ENCODE measurements at regions of chr18 and their contacts with region 1.

Region 1: GRCh38 chr18:76709659-76710645 is 112.4 kb upstream of the ZNF236 start:
- DNase-seq: peak; percentile 6 to 76 (median 47)
- ATAC-seq: peak; percentile 78 to 87 (median 82)
- H3K4me3 ChIP-seq: no peak overlapping the region
- H3K4me3 Mint-ChIP-seq: no peak overlapping the region
- H3K27ac ChIP-seq: no peak overlapping the region
- H3K27ac Mint-ChIP-seq: no peak overlapping the region
- H3K4me1 ChIP-seq: peaks cover 0 to 6% of the 10 kb centered on the region in 2 experiments
- H3K4me1 Mint-ChIP-seq: peaks cover 4 to 9% (median 6%) of the 10 kb centered on the region in 3 donors
- H3K27me3 ChIP-seq: peaks cover 0 to 28% of the 10 kb centered on the region in 2 experiments
- H3K27me3 Mint-ChIP-seq: peaks cover 0 to 2% of the 10 kb centered on the region in 2 donors

Region 2: GRCh38 chr18:76398896-76399612 is 310.9 kb before region 1 on chr18:
- CTCF ChIA-PET with region 1: interaction called, 31 to 36 read pairs
- POLR2A ChIA-PET with region 1: no interaction called
- DNase-seq: peak; percentile 23 to 84 (median 67)
- ATAC-seq: peak; percentile 88 to 96 (median 90)
- H3K4me3 ChIP-seq: no peak overlapping the region
- H3K4me3 Mint-ChIP-seq: no peak overlapping the region
- H3K27ac ChIP-seq: no peak overlapping the region
- H3K27ac Mint-ChIP-seq: peak overlapping the region in 1 of 2 donors; percentile 28
- H3K4me1 ChIP-seq: peaks cover 0 to 2% of the 10 kb centered on the region in 2 experiments
- H3K4me1 Mint-ChIP-seq: peaks cover 17 to 29% (median 26%) of the 10 kb centered on the region in 3 donors
- H3K27me3 ChIP-seq: peaks cover 0 to 13% of the 10 kb centered on the region in 2 experiments
- H3K27me3 Mint-ChIP-seq: no peaks in the 10 kb centered on the region

Region 3: GRCh38 chr18:76721207-76721996 is 11.4 kb after region 1 on chr18:
- CTCF ChIA-PET with region 1: interaction called, 8 to 11 read pairs
- POLR2A ChIA-PET with region 1: no interaction called
- DNase-seq: peak; percentile 53 to 84 (median 70)
- ATAC-seq: peak; percentile 96 to 98 (median 98)
- H3K4me3 ChIP-seq: peak overlapping the region in 1 of 2 donors; percentile 49
- H3K4me3 Mint-ChIP-seq: peak overlapping the region; percentile 59 to 75 (median 74)
- H3K27ac ChIP-seq: peak overlapping the region; percentile 36
- H3K27ac Mint-ChIP-seq: peak overlapping the region; percentile 71 to 87
- H3K4me1 ChIP-seq: peaks cover 30 to 50% of the 10 kb centered on the region in 2 experiments
- H3K4me1 Mint-ChIP-seq: peaks cover 49 to 65% (median 55%) of the 10 kb centered on the region in 3 donors
- H3K27me3 ChIP-seq: peaks cover 0 to 3% of the 10 kb centered on the region in 2 experiments
- H3K27me3 Mint-ChIP-seq: no peaks in the 10 kb centered on the region

Region 4: GRCh38 chr18:76741365-76741764 is 31.4 kb after region 1 on chr18:
- CTCF ChIA-PET with region 1: no interaction called
- POLR2A ChIA-PET with region 1: no interaction called
- DNase-seq: no peak
- ATAC-seq: no peak
- H3K4me3 ChIP-seq: no peak overlapping the region
- H3K4me3 Mint-ChIP-seq: no peak overlapping the region
- H3K27ac ChIP-seq: no peak overlapping the region
- H3K27ac Mint-ChIP-seq: no peak overlapping the region
- H3K4me1 ChIP-seq: peaks cover 0 to 3% of the 10 kb centered on the region in 2 experiments
- H3K4me1 Mint-ChIP-seq: peaks cover 0 to 9% (median 3%) of the 10 kb centered on the region in 3 donors
- H3K27me3 ChIP-seq: peaks cover 0 to 17% of the 10 kb centered on the region in 2 experiments
- H3K27me3 Mint-ChIP-seq: peaks cover 2 to 8% of the 10 kb centered on the region in 2 donors

Measured in T-cell (primary cell).